ENCODE measurements at regions of chr2 and their contacts with region 1.

Region 1: DNA sequence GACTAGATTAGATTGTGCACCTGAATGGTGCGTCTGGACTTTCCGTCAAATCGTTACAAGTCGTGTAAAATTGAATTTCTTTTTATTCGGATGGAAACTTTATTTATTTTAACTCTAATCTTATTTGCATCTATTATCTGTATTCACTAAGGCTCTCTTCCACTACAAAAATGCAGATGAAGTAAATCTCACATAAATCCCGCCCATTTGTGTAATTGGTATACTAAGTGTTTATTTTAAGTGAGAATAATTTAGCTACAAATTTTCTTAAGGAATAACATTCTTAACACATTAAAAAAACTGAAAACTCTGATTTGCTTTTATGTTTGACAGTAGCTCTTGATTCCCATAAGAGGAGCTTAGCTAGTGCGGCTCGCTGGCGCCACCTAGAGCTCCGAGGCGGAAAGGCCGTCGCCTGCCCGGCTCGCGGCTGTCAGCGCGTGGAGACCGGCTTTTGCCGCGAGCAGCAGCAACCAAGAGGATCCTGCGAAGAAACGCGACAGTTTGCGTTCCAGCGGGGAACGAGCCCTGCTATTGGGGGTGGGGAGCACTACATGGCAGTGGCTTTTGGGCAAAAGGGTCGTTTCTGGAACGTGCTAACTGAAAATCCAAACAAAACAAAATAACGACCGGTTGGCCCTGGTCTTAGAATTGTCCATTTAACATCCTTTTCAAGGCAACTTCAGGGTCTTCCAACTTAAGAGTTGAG is 6.7 kb downstream of the SP9 start:
- DNase-seq: peak; percentile 82 to 92
- H3K4me3 ChIP-seq: no peak overlapping the region
- H3K27ac ChIP-seq: no peak overlapping the region
- H3K4me1 ChIP-seq: peaks cover 7 to 46% (median 34%) of the 10 kb centered on the region in 4 donors
- H3K27me3 ChIP-seq: peaks cover 29 to 83% of the 10 kb centered on the region in 2 donors
- CTCF ChIP-seq: peak; percentile 92 to 99

Region 2: GRCh38 chr2:173402405-173402974 is 939.0 kb before region 1 on chr2:
- intact Hi-C with region 1: loop called (anchors 5 kb)
- DNase-seq: peak; percentile 60 to 80
- H3K4me3 ChIP-seq: no peak overlapping the region
- H3K27ac ChIP-seq: no peak overlapping the region
- H3K4me1 ChIP-seq: peaks cover 0 to 18% (median 9%) of the 10 kb centered on the region in 4 donors
- H3K27me3 ChIP-seq: peaks cover 0 to 51% of the 10 kb centered on the region in 2 donors
- CTCF ChIP-seq: peak; percentile 83 to 89

Region 3: GRCh38 chr2:174259981-174260380 is 81.5 kb before region 1 on chr2:
- intact Hi-C with region 1: loop called (anchors 10 kb)
- DNase-seq: no peak
- H3K4me3 ChIP-seq: no peak overlapping the region
- H3K27ac ChIP-seq: no peak overlapping the region
- H3K4me1 ChIP-seq: no peaks in the 10 kb centered on the region
- H3K27me3 ChIP-seq: peaks cover 0 to 8% of the 10 kb centered on the region in 2 donors
- CTCF ChIP-seq: no peak

Region 4: GRCh38 chr2:174465327-174465726 is 123.9 kb after region 1 on chr2:
- intact Hi-C with region 1: no loop called
- DNase-seq: no peak
- H3K4me3 ChIP-seq: no peak overlapping the region
- H3K27ac ChIP-seq: no peak overlapping the region
- H3K4me1 ChIP-seq: no peaks in the 10 kb centered on the region
- H3K27me3 ChIP-seq: no peaks in the 10 kb centered on the region
- CTCF ChIP-seq: no peak

Measured in tibial artery (tissue), 4 donors.